Gastrocnemius medialis (tissue), 4 donors: ENCODE measurements at regions of chr12 and their contacts with region 1.

Region 1: GRCh38 chr12:12704593-12705230 is 8.7 kb upstream of the GPR19 start:
- DNase-seq: peak in 1 of 2 donors; percentile 46
- ATAC-seq: peak; percentile 100
- H3K4me3 ChIP-seq: no peak overlapping the region
- H3K27ac ChIP-seq: no peak overlapping the region
- H3K4me1 ChIP-seq: no peaks in the 10 kb centered on the region
- H3K27me3 ChIP-seq: no peaks in the 10 kb centered on the region
- CTCF ChIP-seq: peak; percentile 75 to 98 (median 83)
- POLR2A ChIP-seq: no peak

Region 2: DNA sequence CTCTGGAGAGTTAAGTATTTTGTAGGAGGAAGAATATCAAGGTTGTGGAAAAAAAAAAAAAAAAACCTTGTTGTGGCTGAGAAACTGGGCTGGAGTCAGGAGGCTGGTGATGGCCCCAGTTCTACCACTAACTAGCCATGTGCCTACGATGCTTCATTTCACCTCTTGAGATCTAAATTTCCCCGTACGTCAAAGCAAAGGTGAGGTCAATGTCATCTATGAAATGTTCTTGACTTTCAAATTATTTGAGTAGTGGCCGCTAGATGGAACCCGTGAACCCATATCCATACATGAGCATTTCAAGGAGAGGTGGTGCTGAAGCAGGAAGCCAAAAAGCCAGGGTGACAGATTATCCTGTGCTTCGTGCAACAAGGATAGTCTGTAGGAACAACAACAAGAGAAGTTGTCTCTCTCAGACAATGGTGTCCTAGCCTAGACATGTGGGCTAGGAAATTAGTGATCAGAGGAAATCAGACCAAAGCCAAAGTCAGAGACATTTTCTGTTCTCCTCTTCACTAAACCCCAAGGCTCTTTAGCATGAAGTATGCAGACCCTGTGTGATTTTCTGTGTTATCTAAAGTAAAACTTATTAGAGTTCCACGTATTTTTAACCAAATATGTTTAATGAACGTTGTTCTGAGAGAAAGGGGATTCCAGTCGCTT is 1150.7 kb before region 1 on chr12:
- in situ Hi-C with region 1: no loop called
- intact Hi-C with region 1: loop called (anchors 5 kb)
- DNase-seq: no peak
- ATAC-seq: no peak
- H3K4me3 ChIP-seq: no peak overlapping the region
- H3K27ac ChIP-seq: no peak overlapping the region
- H3K4me1 ChIP-seq: no peaks in the 10 kb centered on the region
- H3K27me3 ChIP-seq: no peaks in the 10 kb centered on the region
- CTCF ChIP-seq: peak in 2 of 5 experiments; percentile 22 to 51
- POLR2A ChIP-seq: no peak

Region 3: GRCh38 chr12:12081836-12082497 is 622.7 kb before region 1 on chr12:
- in situ Hi-C with region 1: no loop called
- intact Hi-C with region 1: loop called (anchors 10 kb)
- DNase-seq: no peak
- ATAC-seq: peak; percentile 74 to 82
- H3K4me3 ChIP-seq: no peak overlapping the region
- H3K27ac ChIP-seq: peak overlapping the region in 3 of 4 donors; percentile 6 to 52 (median 21)
- H3K4me1 ChIP-seq: no peaks in the 10 kb centered on the region
- H3K27me3 ChIP-seq: no peaks in the 10 kb centered on the region
- CTCF ChIP-seq: peak in 4 of 5 experiments; percentile 8 to 41 (median 22)
- POLR2A ChIP-seq: no peak

Region 4: GRCh38 chr12:12182703-12183365 is 521.9 kb before region 1 on chr12:
- in situ Hi-C with region 1: no loop called
- intact Hi-C with region 1: no loop called
- DNase-seq: no peak
- ATAC-seq: no peak
- H3K4me3 ChIP-seq: no peak overlapping the region
- H3K27ac ChIP-seq: peak overlapping the region in 2 of 4 donors; percentile 2 to 12
- H3K4me1 ChIP-seq: peaks cover 16 to 33% of the 10 kb centered on the region in 2 donors
- H3K27me3 ChIP-seq: no peaks in the 10 kb centered on the region
- CTCF ChIP-seq: no peak
- POLR2A ChIP-seq: no peak

Region 5: DNA sequence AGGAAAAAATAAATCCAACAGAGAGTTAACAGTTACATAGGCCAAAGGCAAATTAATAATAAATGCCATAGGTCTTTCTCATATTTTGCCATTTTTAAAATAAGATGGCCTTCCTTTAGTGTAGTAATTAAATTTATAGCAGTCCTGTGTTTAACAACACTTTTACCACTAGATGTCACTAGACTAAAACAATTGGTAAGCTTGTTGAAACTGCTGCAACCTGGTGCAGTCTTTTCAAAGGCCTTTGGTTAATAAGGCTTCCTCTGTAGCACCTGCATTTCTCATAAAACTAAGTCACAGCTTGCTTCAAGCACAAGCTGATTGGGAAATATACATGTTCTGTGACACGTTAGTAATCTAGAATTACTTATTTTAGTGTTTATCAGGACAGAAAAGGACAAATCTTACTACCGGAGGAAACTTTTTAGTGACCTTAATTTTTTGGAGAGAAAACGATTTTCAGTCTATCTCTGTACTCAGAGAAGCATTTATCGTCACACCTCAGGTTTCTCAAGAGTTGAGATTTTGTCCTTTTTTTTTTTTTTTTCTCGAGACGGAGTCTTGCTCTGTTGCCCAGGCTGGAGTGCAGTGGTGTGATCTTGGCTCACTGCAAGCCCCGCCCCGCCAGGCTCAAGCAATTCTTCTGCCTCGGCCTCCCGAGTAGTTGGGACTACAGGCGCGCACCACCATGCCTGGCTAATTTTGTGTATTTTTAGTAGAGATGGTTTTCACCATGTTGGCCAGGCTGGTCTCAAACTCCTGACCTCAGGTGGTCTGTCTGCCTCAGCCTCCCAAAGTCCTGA is 327.9 kb before region 1 on chr12:
- in situ Hi-C with region 1: loop called (anchors 5 to 25 kb)
- intact Hi-C with region 1: loop called (anchors 1 kb)
- DNase-seq: no peak
- ATAC-seq: peak; percentile 83 to 98
- H3K4me3 ChIP-seq: no peak overlapping the region
- H3K27ac ChIP-seq: no peak overlapping the region
- H3K4me1 ChIP-seq: peaks cover 0 to 12% of the 10 kb centered on the region in 2 donors
- H3K27me3 ChIP-seq: no peaks in the 10 kb centered on the region
- CTCF ChIP-seq: peak; percentile 65 to 86 (median 71)
- POLR2A ChIP-seq: no peak

Region 6: DNA sequence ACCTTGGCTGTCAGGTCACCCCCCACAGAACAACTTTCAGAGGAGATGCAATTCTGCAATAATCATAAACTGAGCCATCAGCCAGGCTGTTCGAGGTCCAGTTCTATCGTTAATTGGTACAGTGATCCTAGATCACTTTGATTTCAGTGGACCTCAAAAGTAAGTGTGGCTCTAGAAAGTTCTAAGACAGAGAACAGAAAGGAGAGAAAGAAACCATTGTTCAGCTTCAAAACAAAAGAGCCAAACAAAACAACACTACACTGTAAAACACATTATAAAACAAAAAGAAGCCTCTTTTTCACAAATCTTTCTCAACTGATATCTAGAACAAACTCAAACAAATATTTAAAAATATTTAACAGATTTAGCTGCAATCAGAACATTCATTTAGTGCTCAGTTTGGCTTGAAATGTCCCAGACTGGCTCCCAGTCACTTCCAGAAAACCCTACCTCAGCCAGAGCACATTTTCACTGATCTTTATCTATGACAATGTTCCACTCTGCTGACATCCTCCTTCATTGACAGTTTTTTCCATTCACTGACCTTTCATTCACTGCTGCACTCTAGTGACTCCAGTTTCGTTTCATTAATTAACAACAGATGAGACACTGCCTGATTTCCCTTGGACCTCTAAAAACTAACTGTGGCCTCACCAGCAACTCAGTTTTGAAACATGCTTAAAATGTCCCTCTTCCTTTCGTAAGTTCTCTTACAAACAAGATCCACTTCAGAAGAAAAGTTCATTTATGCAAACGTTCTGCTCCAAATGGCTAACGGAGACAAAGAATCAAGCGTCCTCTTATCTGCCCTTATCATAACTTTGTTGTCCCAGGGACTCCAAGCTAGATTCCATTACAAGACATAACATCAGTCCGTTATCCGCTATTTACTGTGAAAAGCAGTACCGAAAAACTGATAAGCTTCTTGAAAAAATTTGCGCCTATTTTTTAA is 198.9 kb before region 1 on chr12:
- in situ Hi-C with region 1: loop called in 1 of 4 experiments (anchors 10 kb)
- intact Hi-C with region 1: no loop called
- DNase-seq: no peak
- ATAC-seq: peak; percentile 45 to 65
- H3K4me3 ChIP-seq: peak overlapping the region; percentile 18 to 44 (median 30)
- H3K27ac ChIP-seq: peak overlapping the region; percentile 50 to 77 (median 72)
- H3K4me1 ChIP-seq: peaks cover 48 to 57% of the 10 kb centered on the region in 2 donors
- H3K27me3 ChIP-seq: no peaks in the 10 kb centered on the region
- CTCF ChIP-seq: no peak
- POLR2A ChIP-seq: no peak

Region 7: GRCh38 chr12:12616512-12617310 is 88.0 kb before region 1 on chr12:
- in situ Hi-C with region 1: no loop called
- intact Hi-C with region 1: no loop called
- DNase-seq: no peak
- ATAC-seq: no peak
- H3K4me3 ChIP-seq: no peak overlapping the region
- H3K27ac ChIP-seq: no peak overlapping the region
- H3K4me1 ChIP-seq: peaks cover 13 to 24% of the 10 kb centered on the region in 2 donors
- H3K27me3 ChIP-seq: no peaks in the 10 kb centered on the region
- CTCF ChIP-seq: no peak
- POLR2A ChIP-seq: no peak

Region 8: DNA sequence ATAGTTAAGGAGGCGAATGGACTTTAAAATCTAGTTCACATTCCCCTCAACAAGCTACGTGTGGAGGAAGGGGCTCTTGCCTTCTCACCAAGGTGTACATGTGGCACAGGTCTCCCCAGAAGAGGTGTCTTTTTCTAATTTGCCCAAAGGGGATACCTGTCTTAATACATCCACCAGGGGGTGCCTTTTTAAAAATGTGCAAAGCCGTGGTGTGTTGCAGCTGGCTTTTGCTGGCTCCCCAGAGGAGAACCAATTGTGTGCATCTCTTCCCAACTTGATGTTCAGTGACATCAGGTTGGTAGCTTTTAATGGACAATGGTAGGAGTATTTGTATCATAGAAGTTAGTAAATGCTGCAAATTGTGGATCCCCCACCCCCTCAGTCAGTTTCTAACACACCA is 59.2 kb before region 1 on chr12:
- in situ Hi-C with region 1: no loop called
- intact Hi-C with region 1: loop called (anchors 5 kb)
- DNase-seq: no peak
- ATAC-seq: peak in 1 of 2 donors; percentile 41
- H3K4me3 ChIP-seq: no peak overlapping the region
- H3K27ac ChIP-seq: no peak overlapping the region
- H3K4me1 ChIP-seq: no peaks in the 10 kb centered on the region
- H3K27me3 ChIP-seq: no peaks in the 10 kb centered on the region
- CTCF ChIP-seq: peak in 4 of 5 experiments; percentile 19 to 51 (median 32)
- POLR2A ChIP-seq: no peak

Region 9: GRCh38 chr12:12786716-12787601 is 82.2 kb after region 1 on chr12:
- in situ Hi-C with region 1: no loop called
- intact Hi-C with region 1: no loop called
- DNase-seq: peak; percentile 51 to 73
- ATAC-seq: peak; percentile 72 to 74
- H3K4me3 ChIP-seq: peak overlapping the region; percentile 70 to 87 (median 80)
- H3K27ac ChIP-seq: peak overlapping the region; percentile 87 to 94 (median 92)
- H3K4me1 ChIP-seq: peaks cover 12 to 30% of the 10 kb centered on the region in 2 donors
- H3K27me3 ChIP-seq: no peaks in the 10 kb centered on the region
- CTCF ChIP-seq: peak; percentile 20 to 42 (median 32)
- POLR2A ChIP-seq: peak; percentile 59 to 71